ENCODE measurements at regions of chr4 and their contacts with region 1.

Region 1: DNA sequence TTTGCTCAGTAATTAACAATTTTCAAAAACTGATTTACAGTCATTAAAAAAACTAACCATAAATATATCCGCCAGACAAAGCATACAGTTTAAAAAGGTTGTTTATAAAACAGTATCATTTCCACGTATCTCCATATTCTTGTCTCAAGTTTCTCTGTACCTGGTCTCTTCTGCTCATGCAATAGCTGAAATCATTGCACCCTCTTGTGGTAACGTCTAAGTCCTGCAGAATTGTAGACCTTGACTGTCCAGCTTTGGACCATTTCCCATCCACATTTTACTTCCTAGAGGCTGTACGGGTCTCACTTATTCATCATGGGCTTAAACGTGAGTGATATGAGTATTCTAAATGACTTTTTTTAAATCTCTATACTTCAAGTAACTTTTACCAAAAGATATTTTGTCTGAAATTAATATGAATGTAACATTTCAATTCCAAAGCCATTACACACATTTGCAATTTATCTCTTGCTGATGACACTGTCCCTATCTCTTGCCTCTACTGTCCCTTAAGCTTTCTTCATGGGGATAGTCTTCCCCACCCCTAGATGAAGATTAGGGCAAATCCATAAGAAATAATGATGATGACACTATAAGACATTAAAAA is 118.5 kb downstream of the BTC start:
- DNase-seq: no peak
- H3K4me3 ChIP-seq: no peak overlapping the region
- H3K27ac ChIP-seq: no peak overlapping the region
- H3K4me1 ChIP-seq: peaks cover 0 to 4% (median 0%) of the 10 kb centered on the region in 6 donors
- H3K27me3 ChIP-seq: no peaks in the 10 kb centered on the region
- CTCF ChIP-seq: peak in 10 of 11 experiments; percentile 15 to 66 (median 54)
- POLR2A ChIP-seq: no peak

Region 2: DNA sequence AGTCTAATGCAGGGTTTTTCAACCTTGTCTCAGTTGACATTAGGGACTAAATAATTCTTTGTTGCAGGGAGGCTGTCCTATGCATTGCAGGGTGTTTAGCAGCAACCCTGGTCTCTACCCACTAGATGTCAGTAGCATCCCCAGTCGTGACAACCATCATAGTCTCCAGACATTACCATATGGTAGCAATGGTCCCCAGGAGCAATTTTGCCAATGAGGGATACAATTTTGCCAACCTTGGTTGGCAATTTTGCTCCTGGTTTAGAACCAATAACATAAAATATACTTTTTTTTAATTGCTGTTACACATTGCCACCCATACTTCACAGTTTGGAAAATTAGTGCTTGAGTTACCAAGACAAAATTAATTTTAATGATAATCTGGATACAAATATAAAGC is 304.9 kb before region 1 on chr4:
- intact Hi-C with region 1: loop called (anchors 10 kb)
- DNase-seq: no peak
- H3K4me3 ChIP-seq: no peak overlapping the region
- H3K27ac ChIP-seq: no peak overlapping the region
- H3K4me1 ChIP-seq: peaks cover 0 to 7% (median under 1%) of the 10 kb centered on the region in 6 donors
- H3K27me3 ChIP-seq: peaks cover 0 to 13% (median 4%) of the 10 kb centered on the region in 7 donors
- CTCF ChIP-seq: peak in 8 of 11 experiments; percentile 23 to 62 (median 46)
- POLR2A ChIP-seq: no peak

Region 3: DNA sequence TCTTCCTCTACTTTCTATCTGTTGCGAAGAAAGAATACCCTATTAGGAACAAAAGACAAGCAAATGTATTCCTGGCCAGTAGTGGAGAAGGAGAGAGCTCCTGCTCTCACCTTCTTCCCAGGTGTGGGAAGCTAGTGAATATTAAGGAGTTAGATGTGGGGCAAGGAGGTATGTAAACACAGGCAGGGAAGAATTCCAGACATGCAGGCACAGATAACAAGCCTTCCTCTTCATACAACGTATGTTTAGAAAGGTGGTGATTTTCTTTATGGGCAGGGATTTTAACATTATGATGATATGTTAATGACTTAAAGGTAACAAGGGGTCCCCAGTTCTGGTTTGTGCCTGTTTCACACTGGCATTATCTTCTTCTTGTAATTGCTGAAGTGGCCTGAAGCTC is 145.3 kb after region 1 on chr4:
- intact Hi-C with region 1: no loop called
- DNase-seq: no peak
- H3K4me3 ChIP-seq: no peak overlapping the region
- H3K27ac ChIP-seq: no peak overlapping the region
- H3K4me1 ChIP-seq: no peaks in the 10 kb centered on the region
- H3K27me3 ChIP-seq: peaks cover 0 to 4% (median 0%) of the 10 kb centered on the region in 7 donors
- CTCF ChIP-seq: no peak
- POLR2A ChIP-seq: no peak

Region 4: GRCh38 chr4:75107755-75108612 is 432.2 kb after region 1 on chr4:
- intact Hi-C with region 1: no loop called
- DNase-seq: no peak
- H3K4me3 ChIP-seq: no peak overlapping the region
- H3K27ac ChIP-seq: no peak overlapping the region
- H3K4me1 ChIP-seq: peaks cover 0 to under 1% (median 0%) of the 10 kb centered on the region in 6 donors
- H3K27me3 ChIP-seq: no peaks in the 10 kb centered on the region
- CTCF ChIP-seq: no peak
- POLR2A ChIP-seq: no peak

Measured in spleen (tissue), 13 donors.